HepG2 (cell line): ENCODE measurements at regions of chr5 and their contacts with region 1.

Region 1: GRCh38 chr5:149434162-149435014 is 55.3 kb upstream of the IL17B start:
- DNase-seq: no peak
- ATAC-seq: peak; percentile 32
- H3K4me3 ChIP-seq: no peak overlapping the region
- H3K27ac ChIP-seq: no peak overlapping the region
- H3K4me1 ChIP-seq: peaks cover 77% of the 10 kb centered on the region
- H3K27me3 ChIP-seq: peaks cover 0 to 4% of the 10 kb centered on the region in 2 experiments; a peak in 1 of 5 replicates
- CTCF ChIP-seq: peak; percentile 86
- EP300 ChIP-seq: no peak
- POLR2A ChIP-seq: no peak
- RAD21 ChIP-seq: peak; percentile 53; the same call in 1 of the 2 replicates

Region 2: DNA sequence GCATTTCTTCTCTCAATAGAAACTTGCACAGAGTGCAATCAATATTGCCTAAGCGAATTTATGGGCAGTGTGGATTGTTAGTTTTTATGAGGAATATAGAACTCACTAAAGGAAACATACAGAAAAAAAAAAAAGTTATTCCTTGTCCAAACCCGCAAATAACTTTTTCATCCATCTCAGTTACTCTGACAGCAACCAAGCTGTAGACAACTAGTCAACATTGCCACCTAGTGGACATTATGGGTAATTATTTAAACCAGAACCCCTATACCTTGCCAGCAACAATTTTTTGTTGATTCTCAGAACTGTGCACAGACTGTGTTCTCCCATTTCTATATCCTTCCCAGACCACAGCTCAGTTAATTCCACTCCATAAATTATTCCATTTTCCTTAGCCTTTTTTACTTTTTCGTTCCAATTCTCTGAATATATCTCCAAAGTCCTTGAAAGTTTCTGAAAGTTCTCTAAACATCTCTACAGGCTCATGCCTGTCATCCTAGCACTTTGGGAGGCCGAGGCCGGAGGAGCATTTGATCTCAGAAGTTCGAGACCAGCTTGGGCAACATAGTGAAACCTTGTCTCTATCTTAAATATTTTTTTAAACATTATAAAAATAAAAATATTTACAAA is 165.3 kb before region 1 on chr5:
- CTCF ChIA-PET with region 1: no interaction called
- POLR2A ChIA-PET with region 1: no interaction called
- in situ Hi-C with region 1: no loop called
- intact Hi-C with region 1: loop called (anchors 5 kb)
- DNase-seq: peak; percentile 49
- ATAC-seq: no peak
- H3K4me3 ChIP-seq: no peak overlapping the region
- H3K27ac ChIP-seq: no peak overlapping the region
- H3K4me1 ChIP-seq: peaks cover 29% of the 10 kb centered on the region
- H3K27me3 ChIP-seq: peaks cover 7 to 23% of the 10 kb centered on the region in 2 experiments
- CTCF ChIP-seq: peak; percentile 71
- EP300 ChIP-seq: no peak
- POLR2A ChIP-seq: no peak
- RAD21 ChIP-seq: no peak

Region 3: DNA sequence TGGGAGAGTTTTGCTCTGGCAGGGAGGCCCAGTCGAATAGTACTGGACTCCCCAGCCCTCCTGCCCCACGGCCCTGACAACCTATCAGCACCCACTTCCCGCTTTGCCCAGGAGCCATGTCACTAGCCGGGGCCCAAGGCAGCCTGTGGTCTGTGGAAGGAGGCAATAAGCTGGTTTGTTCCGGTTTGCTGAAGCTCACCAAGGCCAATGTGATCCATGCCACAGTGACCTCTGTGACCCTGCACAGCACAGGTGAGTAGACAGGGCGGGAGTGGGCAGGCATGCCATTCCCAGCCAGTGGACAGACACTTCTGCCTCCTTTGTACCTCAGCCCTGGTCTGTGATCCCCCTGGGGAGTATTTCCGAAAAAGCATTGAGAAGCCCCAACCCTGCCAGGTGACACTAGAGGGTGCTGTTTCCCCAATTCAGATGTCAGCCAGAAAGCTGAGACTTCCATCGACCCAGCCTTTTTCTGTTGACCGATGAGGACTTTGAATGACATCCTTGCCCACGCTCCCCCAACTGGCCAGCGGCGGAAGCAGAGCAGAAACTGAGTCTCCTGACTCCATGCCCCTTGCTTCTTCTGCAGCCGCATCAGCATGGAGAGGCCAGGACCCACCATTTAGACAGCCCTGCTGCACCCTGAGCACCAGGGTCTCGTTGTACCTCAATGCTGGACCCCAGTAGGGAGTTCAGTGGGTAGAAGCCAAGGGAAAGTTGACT is 67.0 kb before region 1 on chr5:
- CTCF ChIA-PET with region 1: interaction called, 23 read pairs
- POLR2A ChIA-PET with region 1: interaction called, 3 read pairs
- in situ Hi-C with region 1: no loop called
- intact Hi-C with region 1: loop called (anchors 1 kb)
- DNase-seq: peak; percentile 89
- ATAC-seq: peak; percentile 87
- H3K4me3 ChIP-seq: peak overlapping the region in 1 of 3 experiments; percentile 51; a peak in 4 of 6 replicates
- H3K27ac ChIP-seq: no peak overlapping the region
- H3K4me1 ChIP-seq: peaks cover 39% of the 10 kb centered on the region
- H3K27me3 ChIP-seq: no peaks in the 10 kb centered on the region; a peak in 1 of 5 replicates
- CTCF ChIP-seq: peak; percentile 94
- EP300 ChIP-seq: peak in 1 of 2 experiments; percentile 36; a peak in 1 of 4 replicates
- POLR2A ChIP-seq: no peak
- RAD21 ChIP-seq: peak; percentile 86

Region 4: DNA sequence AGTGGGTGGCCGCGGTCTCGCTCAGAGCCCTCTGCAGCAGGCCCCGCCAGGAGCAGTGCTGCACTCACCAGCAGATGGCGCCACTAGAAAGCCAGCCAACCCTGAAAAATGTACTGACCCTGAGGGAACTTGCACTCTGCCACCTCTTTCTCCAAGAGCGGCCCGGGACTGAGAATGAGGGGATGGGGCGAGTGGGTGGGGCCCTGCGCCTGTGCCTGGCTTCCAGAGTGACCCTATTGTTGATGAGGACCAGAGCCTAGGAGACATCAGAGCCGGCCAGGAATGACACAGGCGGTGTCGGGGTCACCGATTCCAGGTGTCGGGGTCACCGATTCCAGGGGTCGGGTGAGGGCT is 52.4 kb before region 1 on chr5:
- CTCF ChIA-PET with region 1: interaction called, 35 read pairs
- POLR2A ChIA-PET with region 1: no interaction called
- in situ Hi-C with region 1: loop called (anchors 10 kb)
- intact Hi-C with region 1: loop called (anchors 1 kb)
- DNase-seq: peak; percentile 52
- ATAC-seq: peak; percentile 84
- H3K4me3 ChIP-seq: peak overlapping the region in 1 of 3 experiments; percentile 70; a peak in 3 of 6 replicates
- H3K27ac ChIP-seq: no peak overlapping the region
- H3K4me1 ChIP-seq: peaks cover 74% of the 10 kb centered on the region
- H3K27me3 ChIP-seq: peaks cover 3 to 5% of the 10 kb centered on the region in 2 experiments; a peak in 2 of 5 replicates
- CTCF ChIP-seq: peak; percentile 98
- EP300 ChIP-seq: no peak
- POLR2A ChIP-seq: no peak
- RAD21 ChIP-seq: peak; percentile 88

Region 5: GRCh38 chr5:149561848-149562247 is 127.5 kb after region 1 on chr5:
- CTCF ChIA-PET with region 1: interaction called, 10 read pairs
- POLR2A ChIA-PET with region 1: no interaction called
- in situ Hi-C with region 1: no loop called
- intact Hi-C with region 1: no loop called
- DNase-seq: peak; percentile 36
- ATAC-seq: no peak
- H3K4me3 ChIP-seq: no peak overlapping the region
- H3K27ac ChIP-seq: no peak overlapping the region
- H3K4me1 ChIP-seq: peaks cover 16% of the 10 kb centered on the region
- H3K27me3 ChIP-seq: no peaks in the 10 kb centered on the region
- CTCF ChIP-seq: no peak
- EP300 ChIP-seq: no peak
- POLR2A ChIP-seq: no peak
- RAD21 ChIP-seq: no peak

Region 6: DNA sequence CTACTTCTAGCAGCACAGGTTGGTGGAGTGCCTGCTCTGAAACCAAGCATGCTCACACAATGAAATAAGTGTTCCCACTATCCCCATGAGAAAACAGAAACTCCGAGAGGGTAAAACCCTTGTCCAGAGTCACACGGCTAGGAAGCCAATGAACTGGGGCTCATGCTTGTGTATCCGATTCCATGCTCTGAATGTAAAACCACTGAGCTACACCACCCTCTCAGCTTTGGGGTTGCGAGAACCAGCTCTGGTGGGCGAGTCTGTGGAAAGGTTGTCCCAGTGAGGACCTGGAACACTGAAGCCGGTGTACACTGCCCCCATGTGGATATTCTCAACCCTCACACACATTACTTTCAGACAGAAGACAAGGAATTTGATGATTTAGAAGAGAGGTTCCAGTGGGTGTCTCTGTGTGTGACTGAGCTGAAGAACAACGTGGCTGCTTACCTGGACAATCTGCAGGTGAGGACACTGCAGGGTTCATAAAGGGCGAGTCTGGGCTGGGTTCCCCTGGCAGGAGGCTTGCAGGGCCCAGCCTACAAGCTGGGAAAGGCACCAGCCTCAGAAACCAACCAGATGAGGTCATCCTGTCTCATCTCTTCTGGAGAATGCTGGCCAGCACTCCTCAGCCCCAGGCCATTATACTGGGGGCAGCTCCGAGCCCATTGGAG is 184.3 kb after region 1 on chr5:
- CTCF ChIA-PET with region 1: no interaction called
- POLR2A ChIA-PET with region 1: no interaction called
- in situ Hi-C with region 1: no loop called
- intact Hi-C with region 1: loop called (anchors 5 kb)
- DNase-seq: peak; percentile 53
- ATAC-seq: peak; percentile 84
- H3K4me3 ChIP-seq: no peak overlapping the region
- H3K27ac ChIP-seq: no peak overlapping the region
- H3K4me1 ChIP-seq: peaks cover 20% of the 10 kb centered on the region
- H3K27me3 ChIP-seq: peaks cover 0 to 3% of the 10 kb centered on the region in 2 experiments; a peak in 1 of 5 replicates
- CTCF ChIP-seq: peak; percentile 89
- EP300 ChIP-seq: no peak
- POLR2A ChIP-seq: no peak
- RAD21 ChIP-seq: peak; percentile 75